Right ventricle myocardium inferior (tissue), 1 donor: ENCODE measurements at regions of chr17 and their contacts with region 1.

Region 1: DNA sequence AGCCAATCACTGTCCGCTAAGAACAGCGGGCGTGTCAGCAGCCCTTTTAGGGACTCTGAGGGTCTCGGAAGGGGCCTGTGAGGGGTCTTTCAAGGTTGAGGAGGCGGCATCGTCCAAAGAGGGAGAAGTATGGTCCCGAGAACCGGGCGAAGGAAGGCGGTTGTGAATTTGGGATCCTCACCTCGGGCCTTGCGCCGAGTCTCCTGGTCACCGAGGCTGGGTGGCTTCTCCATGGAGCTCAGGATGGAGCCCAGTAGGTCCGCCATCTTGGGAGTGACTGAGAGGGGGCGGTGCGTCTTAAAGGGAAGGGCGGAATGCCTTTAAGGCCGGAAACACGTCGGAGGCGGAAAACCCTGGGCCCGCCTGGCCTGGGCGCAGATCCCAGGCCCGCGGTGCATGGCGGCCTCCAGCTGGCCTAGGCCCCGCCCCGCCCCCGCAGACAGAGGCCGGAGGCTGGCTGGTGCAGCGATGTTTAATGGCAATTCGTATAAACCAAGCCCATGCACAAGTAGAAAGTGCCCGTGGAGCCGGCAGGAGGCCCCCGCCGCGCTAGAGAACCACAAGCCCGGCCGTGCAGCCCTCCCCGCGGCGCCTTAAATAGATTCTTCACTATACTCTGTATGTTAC is at the start of gene SPAG7:
- DNase-seq: peak; percentile 97
- ATAC-seq: peak; percentile 88
- total RNA-seq, gene SPAG7: 166 TPM

Region 2: DNA sequence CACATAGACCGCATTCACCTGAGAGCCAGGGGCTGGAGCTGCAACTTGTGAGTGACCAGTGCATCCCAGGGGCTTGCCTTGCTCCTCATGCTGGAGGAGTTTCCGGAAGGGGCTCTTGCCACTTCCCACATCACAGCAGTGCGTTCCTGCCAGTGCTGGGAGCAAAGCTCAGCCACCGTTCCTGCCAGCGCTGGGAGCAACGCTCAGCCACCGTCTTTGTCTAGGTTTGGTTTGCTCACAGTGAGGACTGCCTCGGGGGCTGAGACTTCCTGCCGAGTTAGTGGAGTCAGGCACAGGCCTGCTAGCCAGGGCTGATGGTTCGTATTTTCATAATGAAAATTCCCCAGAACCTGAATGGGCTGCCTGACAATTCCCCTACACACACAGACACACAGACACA is 59.4 kb before region 1 on chr17:
- intact Hi-C with region 1: loop called (anchors 5 kb)
- DNase-seq: no peak
- ATAC-seq: peak; percentile 24

Region 3: DNA sequence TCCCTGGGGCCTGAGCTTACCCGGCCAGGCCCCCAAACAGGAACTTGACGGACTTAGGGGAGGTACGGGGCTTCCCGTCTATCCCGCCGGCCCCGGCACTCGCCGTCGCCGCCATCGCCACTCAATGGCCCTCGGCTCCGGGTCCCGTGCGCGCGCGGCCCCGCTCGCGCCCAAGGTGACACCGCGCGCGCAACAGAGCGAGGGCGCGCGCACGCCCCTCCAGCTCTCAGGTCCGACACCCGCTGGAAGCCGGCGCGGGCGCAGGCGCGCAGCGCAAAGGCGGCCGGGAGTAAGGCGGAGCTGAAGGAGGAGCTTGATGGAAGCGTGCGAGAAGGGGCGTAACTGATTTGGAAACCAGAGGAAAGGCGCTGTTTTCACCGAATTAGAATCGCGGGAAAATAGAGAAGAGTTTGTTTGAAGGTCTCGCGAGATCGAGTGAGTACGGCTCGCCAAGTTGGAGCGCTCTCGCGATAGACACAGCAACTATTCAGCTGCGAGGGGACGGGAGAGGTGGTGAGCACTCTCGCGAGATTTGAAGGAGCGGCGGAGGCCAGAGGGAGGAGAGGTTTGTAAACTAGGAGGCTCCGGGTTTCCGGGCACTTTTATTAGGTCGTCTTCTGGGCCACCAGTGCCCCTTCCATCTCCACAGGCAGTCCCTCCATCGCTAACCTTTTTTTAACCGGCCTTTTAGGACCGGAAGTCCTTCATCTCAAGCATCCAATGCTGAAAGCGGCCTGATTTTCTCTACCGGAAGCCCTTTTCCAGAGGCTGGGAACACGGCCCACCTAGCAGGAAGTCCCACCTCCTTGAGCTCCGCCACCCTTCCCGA is 27.6 kb before region 1 on chr17 and contains the starts of genes RNF167 and SLC25A11:
- intact Hi-C with region 1: loop called (anchors 1 kb)
- DNase-seq: peak; percentile 97
- ATAC-seq: peak; percentile 94
- total RNA-seq, gene RNF167: 91.8 TPM
- total RNA-seq, gene SLC25A11: 199 TPM

Region 4: GRCh38 chr17:4948931-4949320 is 18.7 kb before region 1 on chr17:
- intact Hi-C with region 1: loop called (anchors 1 kb)
- DNase-seq: peak; percentile 92
- ATAC-seq: peak; percentile 86

Region 5: GRCh38 chr17:4986951-4987766 is 19.5 kb after region 1 on chr17 and contains the start of gene CAMTA2:
- intact Hi-C with region 1: loop called (anchors 1 kb)
- DNase-seq: peak; percentile 97
- ATAC-seq: peak; percentile 93
- total RNA-seq, gene CAMTA2: 37.1 TPM

Region 6: GRCh38 chr17:5031365-5032082 is 63.9 kb after region 1 on chr17:
- intact Hi-C with region 1: no loop called
- DNase-seq: peak; percentile 89
- ATAC-seq: peak; percentile 73